Mammary epithelial cell (primary cell): ENCODE measurements at regions of chr18 and their contacts with region 1.

Region 1: GRCh38 chr18:53909668-53910067 is 314.8 kb downstream of the MBD2 start:
- DNase-seq: peak; percentile 11
- H3K4me3 ChIP-seq: no peak overlapping the region
- H3K27ac ChIP-seq: no peak overlapping the region
- H3K4me1 ChIP-seq: no peaks in the 10 kb centered on the region
- H3K27me3 ChIP-seq: no peaks in the 10 kb centered on the region
- CTCF ChIP-seq: peak; percentile 40 to 54

Region 2: GRCh38 chr18:54043484-54044251 is 134.0 kb after region 1 on chr18:
- CTCF ChIA-PET with region 1: no interaction called
- dilution Hi-C with region 1: no loop called
- in situ Hi-C with region 1: no loop called
- intact Hi-C with region 1: loop called (anchors 1 kb)
- DNase-seq: peak; percentile 67
- H3K4me3 ChIP-seq: no peak overlapping the region
- H3K27ac ChIP-seq: no peak overlapping the region
- H3K4me1 ChIP-seq: peaks cover 4% of the 10 kb centered on the region
- H3K27me3 ChIP-seq: no peaks in the 10 kb centered on the region
- CTCF ChIP-seq: peak; percentile 4 to 39

Region 3: DNA sequence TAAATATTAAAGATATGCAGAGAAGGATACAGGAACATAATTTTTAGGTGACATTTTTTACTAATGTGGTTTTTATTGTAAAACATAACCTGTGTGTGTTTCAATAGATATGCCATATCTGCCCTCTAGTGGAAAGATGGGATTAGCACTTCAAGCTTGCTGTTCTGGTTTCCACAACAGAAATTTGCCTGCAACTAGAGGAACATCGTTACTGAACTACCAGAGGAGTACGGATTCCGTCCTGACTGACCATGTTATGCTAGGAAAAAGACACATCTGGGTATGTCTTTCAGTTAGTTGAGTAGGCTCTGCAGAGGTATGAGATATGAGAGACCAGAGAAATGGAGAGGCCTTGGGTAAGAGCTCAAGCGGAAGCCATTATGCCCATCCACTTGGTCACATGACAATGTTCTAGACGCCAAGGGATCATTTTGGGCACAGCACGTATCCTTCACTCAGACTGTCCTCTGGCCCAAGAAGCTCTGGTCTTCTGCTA is 209.9 kb after region 1 on chr18:
- CTCF ChIA-PET with region 1: no interaction called
- dilution Hi-C with region 1: no loop called
- in situ Hi-C with region 1: loop called in 1 of 2 experiments (anchors 10 kb)
- intact Hi-C with region 1: loop called (anchors 1 kb)
- DNase-seq: peak; percentile 51
- H3K4me3 ChIP-seq: no peak overlapping the region
- H3K27ac ChIP-seq: no peak overlapping the region
- H3K4me1 ChIP-seq: no peaks in the 10 kb centered on the region
- H3K27me3 ChIP-seq: no peaks in the 10 kb centered on the region
- CTCF ChIP-seq: peak; percentile 80 to 95

Region 4: GRCh38 chr18:54972690-54973445 is 1063.2 kb after region 1 on chr18:
- CTCF ChIA-PET with region 1: no interaction called
- dilution Hi-C with region 1: no loop called
- in situ Hi-C with region 1: no loop called
- intact Hi-C with region 1: loop called (anchors 10 kb)
- DNase-seq: no peak
- H3K4me3 ChIP-seq: no peak overlapping the region
- H3K27ac ChIP-seq: no peak overlapping the region
- H3K4me1 ChIP-seq: no peaks in the 10 kb centered on the region
- H3K27me3 ChIP-seq: no peaks in the 10 kb centered on the region
- CTCF ChIP-seq: no peak